Pancreas (tissue), 10 donors: ENCODE measurements at regions of chr11 and their contacts with region 1.

Region 1: GRCh38 chr11:117226388-117227385 is 5.2 kb downstream of the PCSK7 start:
- DNase-seq: peak in 3 of 6 donors; percentile 57 to 64 (median 63)
- ATAC-seq: peak; percentile 81 to 93 (median 88)
- H3K4me3 ChIP-seq: no peak overlapping the region
- H3K27ac ChIP-seq: no peak overlapping the region
- H3K4me1 ChIP-seq: peaks cover 6 to 17% (median 10%) of the 10 kb centered on the region in 3 donors
- H3K27me3 ChIP-seq: no peaks in the 10 kb centered on the region
- CTCF ChIP-seq: peak; percentile 49 to 72 (median 64)

Region 2: DNA sequence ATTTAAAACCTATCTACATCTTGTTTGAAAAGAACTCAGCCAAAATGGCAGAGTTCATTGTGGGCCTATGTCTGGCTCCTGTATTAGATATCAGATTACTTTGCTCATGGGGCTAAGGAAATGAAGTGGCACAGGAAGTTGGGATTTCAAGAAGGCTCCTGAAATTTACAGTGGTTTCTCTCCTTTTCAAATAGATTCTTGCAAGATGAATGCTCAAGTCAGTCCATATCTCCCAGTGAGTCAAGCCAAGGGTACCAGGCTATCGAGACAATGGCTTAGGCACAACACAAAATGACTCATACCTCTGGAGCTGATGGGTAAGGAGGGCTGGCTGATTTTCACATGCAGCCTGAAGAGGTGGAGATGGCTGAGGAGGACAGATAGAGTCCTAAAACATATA is 365.1 kb before region 1 on chr11:
- intact Hi-C with region 1: loop called in 1 of 3 experiments (anchors 10 kb)
- DNase-seq: no peak
- ATAC-seq: no peak
- H3K4me3 ChIP-seq: no peak overlapping the region
- H3K27ac ChIP-seq: no peak overlapping the region
- H3K4me1 ChIP-seq: no peaks in the 10 kb centered on the region
- H3K27me3 ChIP-seq: no peaks in the 10 kb centered on the region
- CTCF ChIP-seq: no peak

Region 3: DNA sequence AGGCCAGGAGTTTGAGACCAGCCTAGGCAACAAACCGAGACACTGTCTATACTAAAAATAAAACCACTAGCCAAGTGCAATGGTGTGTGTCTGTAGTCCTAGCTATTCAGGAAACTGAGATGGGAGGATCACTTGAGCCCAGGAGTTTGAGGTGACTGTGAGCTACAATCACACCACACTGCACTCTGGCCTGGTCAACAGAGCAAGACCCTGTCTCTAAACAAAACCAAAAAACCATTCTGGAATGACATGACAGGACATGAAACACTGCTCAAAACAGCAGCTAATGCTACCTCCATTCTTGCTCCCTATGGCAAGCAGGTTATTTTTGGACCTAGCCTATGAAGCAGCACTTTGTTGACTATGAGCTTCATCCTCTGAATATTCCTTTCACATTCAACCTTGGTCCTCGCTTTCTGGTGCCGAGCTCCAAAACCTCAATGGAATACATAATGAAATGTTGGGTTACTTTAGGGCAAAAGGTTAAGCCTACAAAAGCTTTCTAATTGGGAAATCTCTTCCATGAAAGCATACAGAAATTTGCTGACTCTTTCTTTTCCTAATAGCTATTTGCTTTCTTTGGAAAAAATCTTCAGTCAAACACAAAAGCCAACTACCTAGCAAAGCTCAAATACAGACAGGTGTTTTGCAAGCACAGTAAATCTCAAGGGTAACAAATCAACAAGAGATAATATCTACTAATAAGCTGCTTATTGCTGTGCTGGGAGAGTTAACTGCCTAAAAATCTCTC is 149.6 kb before region 1 on chr11:
- intact Hi-C with region 1: no loop called
- DNase-seq: no peak
- ATAC-seq: peak in 3 of 4 donors; percentile 48 to 58 (median 51)
- H3K4me3 ChIP-seq: no peak overlapping the region
- H3K27ac ChIP-seq: no peak overlapping the region
- H3K4me1 ChIP-seq: peaks cover 10 to 26% (median 25%) of the 10 kb centered on the region in 3 donors
- H3K27me3 ChIP-seq: no peaks in the 10 kb centered on the region
- CTCF ChIP-seq: no peak

Region 4: DNA sequence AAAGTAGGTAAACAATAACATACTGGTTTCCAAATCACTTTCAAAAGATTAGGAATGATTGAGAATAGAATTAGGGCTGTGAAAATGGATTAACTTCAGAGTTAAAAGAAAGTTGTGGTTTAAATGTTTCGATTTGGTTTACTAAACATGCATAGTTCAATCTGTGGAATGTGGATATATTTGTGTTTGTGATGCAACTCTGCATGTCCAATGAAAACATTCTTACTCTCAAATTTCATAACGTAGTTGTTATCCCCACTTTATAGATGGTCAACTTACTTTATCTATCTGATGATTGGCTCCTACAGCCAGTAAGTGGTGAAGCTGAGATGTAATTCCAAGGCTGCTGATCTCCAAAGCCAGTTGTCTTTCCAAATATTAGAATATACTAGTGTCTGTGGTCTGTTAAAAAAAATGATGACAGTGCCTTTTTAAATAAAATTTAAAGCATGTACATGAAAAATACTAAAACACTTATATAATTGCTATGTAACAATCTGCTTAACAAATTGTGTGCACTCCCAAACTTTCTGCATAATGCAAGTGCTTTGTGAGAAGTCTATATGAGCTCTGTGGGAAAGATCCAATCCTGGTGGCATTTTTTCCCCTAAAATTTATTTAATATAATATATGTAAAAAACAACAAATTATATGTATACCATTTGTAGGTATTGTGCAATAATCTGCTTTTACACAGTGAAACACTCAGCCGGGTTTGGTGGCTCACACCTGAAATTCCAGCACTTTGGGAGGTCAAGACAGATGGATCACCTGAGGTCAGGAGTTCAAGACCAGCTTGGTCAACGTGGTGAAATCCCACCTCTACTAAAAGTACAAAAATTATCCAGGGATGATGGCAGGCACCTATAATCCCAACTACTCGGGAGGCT is 118.7 kb before region 1 on chr11:
- intact Hi-C with region 1: loop called in 1 of 3 experiments (anchors 10 kb)
- DNase-seq: no peak
- ATAC-seq: no peak
- H3K4me3 ChIP-seq: no peak overlapping the region
- H3K27ac ChIP-seq: no peak overlapping the region
- H3K4me1 ChIP-seq: no peaks in the 10 kb centered on the region
- H3K27me3 ChIP-seq: no peaks in the 10 kb centered on the region
- CTCF ChIP-seq: no peak

Region 5: GRCh38 chr11:117180661-117181585 is 45.8 kb before region 1 on chr11:
- intact Hi-C with region 1: loop called in 2 of 3 experiments (anchors 5 kb)
- DNase-seq: peak; percentile 81 to 92 (median 84)
- ATAC-seq: peak; percentile 43 to 62 (median 60)
- H3K4me3 ChIP-seq: peak overlapping the region in 2 of 4 donors; percentile 82 to 86
- H3K27ac ChIP-seq: peak overlapping the region in 3 of 4 donors; percentile 7 to 98 (median 92)
- H3K4me1 ChIP-seq: peaks cover 8 to 36% (median 18%) of the 10 kb centered on the region in 3 donors
- H3K27me3 ChIP-seq: no peaks in the 10 kb centered on the region
- CTCF ChIP-seq: peak; percentile 29 to 56 (median 48)

Region 6: GRCh38 chr11:117189191-117189930 is 37.3 kb before region 1 on chr11:
- intact Hi-C with region 1: loop called in 2 of 3 experiments (anchors 5 kb)
- DNase-seq: no peak
- ATAC-seq: peak in 1 of 4 donors; percentile 2
- H3K4me3 ChIP-seq: no peak overlapping the region
- H3K27ac ChIP-seq: peak overlapping the region in 1 of 4 donors; percentile 11
- H3K4me1 ChIP-seq: peaks cover 8 to 12% (median 9%) of the 10 kb centered on the region in 3 donors
- H3K27me3 ChIP-seq: no peaks in the 10 kb centered on the region
- CTCF ChIP-seq: no peak